Esophagus muscularis mucosa (tissue), 4 donors: ENCODE measurements at regions of chr10 and their contacts with region 1.

Region 1: DNA sequence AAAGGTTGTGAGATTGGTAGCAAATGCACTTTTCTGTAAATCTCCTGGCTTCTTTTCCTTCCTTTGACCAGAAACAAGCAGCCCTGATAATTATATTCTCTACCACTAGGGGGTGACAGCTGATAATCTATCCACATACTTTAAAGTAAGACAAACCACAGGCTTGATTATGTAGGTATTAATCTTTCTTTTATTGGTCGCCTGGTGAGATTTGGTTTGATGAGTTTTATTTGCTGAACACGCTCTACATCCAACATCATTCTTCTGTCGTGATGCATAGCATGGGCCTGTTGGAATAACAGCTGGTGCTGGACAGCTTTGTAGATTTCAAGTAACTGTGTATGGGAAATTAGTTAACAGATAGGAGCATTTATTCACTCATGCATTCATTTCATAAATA is 63.5 kb downstream of the ZNF365 start:
- DNase-seq: no peak
- H3K4me3 ChIP-seq: no peak overlapping the region
- H3K27ac ChIP-seq: no peak overlapping the region
- H3K4me1 ChIP-seq: peaks cover 3 to 11% (median 11%) of the 10 kb centered on the region in 4 donors
- H3K27me3 ChIP-seq: no peaks in the 10 kb centered on the region
- CTCF ChIP-seq: peak; percentile 69 to 83 (median 72)
- EP300 ChIP-seq: no peak
- POLR2A ChIP-seq: no peak

Region 2: DNA sequence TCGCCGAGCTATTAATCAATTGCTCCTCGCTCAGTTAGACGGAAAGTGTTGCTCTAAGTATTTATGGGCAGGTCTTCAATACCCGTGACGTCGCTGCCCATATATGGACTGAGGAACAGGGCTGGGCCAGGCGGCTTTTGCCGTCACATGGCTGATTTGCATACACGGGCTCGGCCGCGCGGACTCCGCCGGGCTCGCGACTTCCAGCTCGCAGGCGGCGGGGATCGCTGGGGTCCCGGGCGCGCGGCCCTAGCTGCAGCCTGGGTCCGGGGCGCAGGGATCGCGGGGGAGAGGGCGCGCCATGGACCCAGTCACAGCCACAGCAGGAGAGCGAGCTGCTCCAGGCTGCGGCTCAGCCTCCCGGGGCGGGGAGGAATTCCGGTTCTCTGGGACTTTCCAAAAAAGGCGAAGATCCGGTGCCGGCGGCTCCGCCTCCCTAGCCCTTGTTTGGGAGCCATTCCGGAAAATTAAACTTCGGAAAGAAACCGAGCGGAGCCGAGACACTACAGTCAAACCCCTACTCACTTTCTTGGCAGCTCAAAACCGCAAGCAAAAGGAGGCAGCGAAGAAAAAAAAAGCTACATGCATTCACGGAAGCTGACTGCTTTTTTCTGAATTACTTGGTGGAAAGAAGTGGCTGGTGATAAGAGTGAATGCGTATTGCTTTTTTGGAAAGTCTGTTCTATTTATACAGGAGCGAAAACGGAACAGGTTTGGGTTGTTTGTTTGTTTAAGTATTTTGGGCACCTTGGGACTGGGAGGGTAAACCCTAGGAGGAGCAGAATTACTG is 378.8 kb after region 1 on chr10 and contains the start of gene EGR2:
- intact Hi-C with region 1: loop called (anchors 5 kb)
- DNase-seq: peak; percentile 99
- H3K4me3 ChIP-seq: peak within 1 kb of the TSS; percentile 67 to 100 (median 76)
- H3K27ac ChIP-seq: peak within 1 kb of the TSS; percentile 83 to 93 (median 85)
- H3K4me1 ChIP-seq: peaks cover 32 to 46% (median 42%) of the 10 kb centered on the region in 4 donors
- H3K27me3 ChIP-seq: peaks cover 0 to 48% (median 16%) of the 10 kb centered on the region in 4 donors
- CTCF ChIP-seq: no peak
- EP300 ChIP-seq: no peak
- POLR2A ChIP-seq: no peak
- total RNA-seq, gene EGR2: 0.26 to 4.0 (median 1.5) TPM

Region 3: DNA sequence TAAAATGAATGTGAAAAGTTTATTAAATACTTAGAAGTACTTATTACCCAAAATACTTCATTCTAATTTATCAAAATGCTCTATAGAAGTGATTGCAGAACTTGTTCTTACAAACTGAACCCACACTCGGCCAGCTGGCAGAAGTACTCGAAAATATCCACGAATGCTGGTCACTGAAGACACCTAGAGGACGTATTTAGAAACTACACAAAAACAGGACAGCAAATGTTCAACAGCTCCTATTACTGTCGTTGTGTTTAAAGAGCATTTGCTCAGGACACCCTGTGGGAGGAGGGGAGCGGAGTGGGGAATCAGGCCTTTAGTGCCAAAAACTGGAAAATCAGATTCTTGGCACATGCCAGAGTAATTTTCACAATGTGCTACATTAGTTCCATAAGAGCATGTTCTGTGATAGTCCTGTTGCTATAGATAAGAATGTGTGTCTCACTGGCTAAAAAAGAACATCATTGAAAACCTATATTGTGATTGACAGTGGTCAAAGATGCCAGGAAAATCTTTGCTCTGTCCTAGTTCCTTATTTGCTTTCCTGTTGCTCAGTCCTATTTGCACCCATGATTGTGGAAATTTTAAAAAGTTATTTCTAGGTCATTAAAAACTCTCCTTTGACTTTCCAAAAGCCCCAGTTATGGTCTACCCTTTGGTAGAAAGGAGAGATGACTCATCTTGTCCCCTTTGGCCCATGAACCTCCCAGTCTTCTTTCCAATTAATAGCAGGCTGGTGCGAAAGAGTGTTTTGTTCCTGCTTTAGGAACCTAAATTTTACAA is 646.4 kb after region 1 on chr10:
- intact Hi-C with region 1: loop called (anchors 5 kb)
- DNase-seq: no peak
- H3K4me3 ChIP-seq: no peak overlapping the region
- H3K27ac ChIP-seq: no peak overlapping the region
- H3K4me1 ChIP-seq: peaks cover 2 to 11% (median 7%) of the 10 kb centered on the region in 4 donors
- H3K27me3 ChIP-seq: peaks cover 0 to 4% (median 0%) of the 10 kb centered on the region in 4 donors
- CTCF ChIP-seq: peak; percentile 62 to 73 (median 72)
- EP300 ChIP-seq: no peak
- POLR2A ChIP-seq: no peak

Region 4: DNA sequence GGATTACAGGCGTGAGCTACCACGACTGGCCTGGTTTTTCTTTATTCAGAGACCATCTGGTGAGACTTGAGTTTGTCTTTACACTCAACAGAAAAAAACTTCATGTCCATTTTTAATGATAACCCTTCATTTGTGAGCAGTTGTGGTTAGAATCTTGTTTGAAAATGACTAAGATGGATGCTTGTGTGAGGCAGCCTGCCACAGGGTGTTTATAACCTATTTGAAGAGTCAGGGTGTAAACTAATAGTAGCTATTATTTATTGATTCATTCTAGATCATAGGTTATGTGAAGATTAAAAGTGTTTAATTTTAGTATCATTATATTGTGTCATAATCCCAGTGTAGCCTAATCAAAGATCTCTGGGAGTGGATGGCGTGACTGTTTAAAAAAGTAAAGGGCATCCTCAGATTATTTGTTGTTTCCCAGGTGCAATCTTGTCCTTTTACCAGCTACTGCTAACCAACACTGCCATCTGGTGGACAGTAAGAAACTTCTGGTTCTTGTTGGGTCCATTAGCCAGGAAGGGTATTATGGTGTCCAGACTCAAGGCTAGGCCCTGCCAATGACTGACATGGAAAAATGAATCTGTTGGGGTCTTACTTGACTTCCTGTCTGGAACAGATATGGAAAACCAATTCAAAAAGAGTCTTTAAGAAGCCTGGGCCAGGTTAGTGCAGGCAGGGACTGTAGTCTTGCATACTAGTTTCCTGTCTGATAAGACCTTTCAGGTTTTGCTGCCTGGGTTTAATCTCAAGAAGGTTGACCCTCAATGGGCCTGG is 720.3 kb after region 1 on chr10:
- intact Hi-C with region 1: loop called (anchors 5 kb)
- DNase-seq: peak; percentile 3
- H3K4me3 ChIP-seq: no peak overlapping the region
- H3K27ac ChIP-seq: no peak overlapping the region
- H3K4me1 ChIP-seq: peaks cover 0 to 33% (median 25%) of the 10 kb centered on the region in 4 donors
- H3K27me3 ChIP-seq: no peaks in the 10 kb centered on the region
- CTCF ChIP-seq: peak; percentile 72 to 80 (median 74)
- EP300 ChIP-seq: no peak
- POLR2A ChIP-seq: no peak